IMR-90 (cell line): ENCODE measurements at regions of chr13 and their contacts with region 1.

Region 1: DNA sequence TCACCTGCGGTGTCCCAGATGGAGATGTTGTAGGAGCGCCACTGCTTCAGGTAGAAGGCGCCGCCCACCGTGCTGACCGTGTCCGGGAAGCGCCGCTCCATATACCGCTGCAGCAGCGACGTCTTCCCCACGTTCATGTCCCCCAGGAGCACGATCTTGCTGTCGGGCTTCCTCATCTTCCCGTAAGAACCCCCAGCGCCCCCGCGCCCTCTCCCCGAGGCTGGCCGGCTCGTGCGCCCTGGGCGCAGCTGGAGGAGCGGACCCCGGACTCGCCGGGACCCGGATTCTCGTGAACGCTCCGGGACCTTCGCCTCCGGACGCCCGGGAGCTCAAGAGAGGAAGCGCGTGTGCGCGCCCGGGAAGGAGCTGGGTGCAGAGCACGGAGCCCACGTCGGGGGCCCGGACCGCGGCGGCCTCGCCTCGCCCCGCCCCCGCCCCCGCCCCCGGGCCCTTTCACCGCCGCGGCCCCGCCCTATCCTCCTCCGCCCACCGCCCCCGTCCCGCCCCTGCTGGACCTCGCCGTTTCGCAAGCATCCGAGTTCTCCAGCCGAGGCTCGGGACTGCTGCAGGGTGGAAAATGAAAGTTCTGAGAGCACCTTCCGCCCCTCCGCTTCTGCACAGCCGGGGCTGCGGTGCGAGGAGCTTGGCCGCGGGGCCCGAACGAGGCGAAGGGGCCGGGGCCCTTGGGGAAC is at the start of gene RAB20:
- DNase-seq: peak; percentile 76
- ATAC-seq: peak; percentile 88
- H3K4me3 ChIP-seq: peak within 1 kb of the TSS; percentile 100
- H3K27ac ChIP-seq: peak within 1 kb of the TSS; percentile 99
- H3K4me1 ChIP-seq: peaks cover 8% of the 10 kb centered on the region
- H3K27me3 ChIP-seq: no peaks in the 10 kb centered on the region
- CTCF ChIP-seq: no peak
- POLR2A ChIP-seq: no peak
- RAD21 ChIP-seq: no peak
- total RNA-seq, gene RAB20: 3.6 and 3.8 TPM in 2 replicates

Region 2: GRCh38 chr13:110509971-110510786 is 51.3 kb before region 1 on chr13:
- CTCF ChIA-PET with region 1: no interaction called
- POLR2A ChIA-PET with region 1: interaction called, 3 read pairs
- dilution Hi-C with region 1: no loop called
- in situ Hi-C with region 1: no loop called
- intact Hi-C with region 1: loop called (anchors 5 kb)
- DNase-seq: peak; percentile 30
- ATAC-seq: peak; percentile 49
- H3K4me3 ChIP-seq: no peak overlapping the region
- H3K27ac ChIP-seq: peak overlapping the region; percentile 16; the same call in 1 of the 2 replicates
- H3K4me1 ChIP-seq: peaks cover 18% of the 10 kb centered on the region
- H3K27me3 ChIP-seq: no peaks in the 10 kb centered on the region
- CTCF ChIP-seq: no peak
- POLR2A ChIP-seq: no peak
- RAD21 ChIP-seq: no peak

Region 3: GRCh38 chr13:110546930-110547329 is 14.6 kb before region 1 on chr13:
- CTCF ChIA-PET with region 1: no interaction called
- POLR2A ChIA-PET with region 1: no interaction called
- dilution Hi-C with region 1: no loop called
- in situ Hi-C with region 1: no loop called
- intact Hi-C with region 1: no loop called
- DNase-seq: peak; percentile 89
- ATAC-seq: peak; percentile 60
- H3K4me3 ChIP-seq: no peak overlapping the region
- H3K27ac ChIP-seq: no peak overlapping the region
- H3K4me1 ChIP-seq: peaks cover 4% of the 10 kb centered on the region
- H3K27me3 ChIP-seq: no peaks in the 10 kb centered on the region
- CTCF ChIP-seq: no peak
- POLR2A ChIP-seq: no peak
- RAD21 ChIP-seq: no peak

Region 4: GRCh38 chr13:110615322-110616102 is 54.0 kb after region 1 on chr13 and contains the start of gene NAXD:
- CTCF ChIA-PET with region 1: no interaction called
- POLR2A ChIA-PET with region 1: no interaction called
- dilution Hi-C with region 1: no loop called
- in situ Hi-C with region 1: no loop called
- intact Hi-C with region 1: no loop called
- DNase-seq: peak; percentile 93
- ATAC-seq: peak; percentile 89
- H3K4me3 ChIP-seq: peak within 1 kb of the TSS; percentile 91
- H3K27ac ChIP-seq: peak within 1 kb of the TSS; percentile 91
- H3K4me1 ChIP-seq: peaks cover 11% of the 10 kb centered on the region
- H3K27me3 ChIP-seq: no peaks in the 10 kb centered on the region
- CTCF ChIP-seq: no peak
- POLR2A ChIP-seq: peak; percentile 52; the same call in 1 of the 2 replicates
- RAD21 ChIP-seq: no peak
- total RNA-seq, gene NAXD: 9.4 and 10.2 TPM in 2 replicates